SK-N-SH (cell line): ENCODE measurements at regions of chr6 and their contacts with region 1.

Region 1: DNA sequence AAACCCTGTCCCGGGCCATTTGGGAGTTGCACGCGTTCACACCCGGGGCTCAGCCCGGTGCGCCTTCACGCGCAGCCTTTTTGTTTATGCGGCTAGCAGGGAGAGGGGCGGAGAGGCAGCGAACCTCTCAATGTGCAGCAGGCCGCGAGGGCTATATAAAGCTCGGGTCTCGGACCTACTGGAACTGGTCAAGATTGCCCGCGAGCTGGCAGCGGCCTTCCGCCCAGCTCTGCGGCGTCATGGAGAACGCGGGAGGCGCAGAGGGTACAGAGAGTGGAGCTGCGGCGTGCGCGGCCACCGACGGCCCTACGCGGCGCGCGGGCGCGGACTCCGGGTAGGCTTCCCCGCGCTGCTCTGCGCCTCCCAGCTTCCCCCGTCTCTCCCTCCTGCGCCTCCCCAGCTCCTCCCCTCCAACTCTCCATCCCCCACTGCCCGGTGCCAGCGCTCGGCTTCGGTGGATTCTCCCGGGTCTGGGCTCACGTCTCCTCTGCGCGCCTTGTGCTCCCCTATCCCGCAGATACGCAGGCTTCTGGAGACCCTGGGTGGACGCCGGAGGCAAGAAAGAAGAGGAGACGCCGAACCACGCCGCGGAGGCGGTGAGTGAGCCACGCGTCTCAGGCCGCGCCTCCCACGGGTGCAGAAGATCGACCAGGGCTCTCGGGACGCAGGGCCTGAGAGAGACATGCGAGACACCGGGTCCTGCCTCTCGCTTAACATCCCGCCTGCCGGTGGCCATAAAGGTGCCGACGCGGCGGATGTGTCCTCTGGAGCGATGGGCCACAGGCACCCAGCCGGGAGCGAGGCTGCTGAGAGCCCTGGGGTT is at the start of gene RIPPLY2:
- DNase-seq: peak; percentile 89
- H3K4me3 ChIP-seq: peak within 1 kb of the TSS; percentile 57 to 59
- H3K27ac ChIP-seq: peak within 1 kb of the TSS in 1 of 2 experiments; percentile 87; a peak in 2 of 4 replicates
- H3K4me1 ChIP-seq: peaks cover 0 to 8% of the 10 kb centered on the region in 2 experiments; a peak in 2 of 4 replicates
- H3K27me3 ChIP-seq: peaks cover 33% of the 10 kb centered on the region
- CTCF ChIP-seq: no peak
- EP300 ChIP-seq: no peak
- RAD21 ChIP-seq: no peak
- polyA plus RNA-seq, gene RIPPLY2: 0.33 and 1.3 TPM in 2 replicates

Region 2: GRCh38 chr6:83615025-83615999 is 238.1 kb before region 1 on chr6:
- CTCF ChIA-PET with region 1: interaction called, 4 read pairs
- POLR2A ChIA-PET with region 1: interaction called, 27 read pairs
- DNase-seq: peak; percentile 71
- H3K4me3 ChIP-seq: peak overlapping the region in 1 of 2 experiments; percentile 29; a peak in 3 of 4 replicates
- H3K27ac ChIP-seq: peak overlapping the region; percentile 29 to 100; a peak in 3 of 4 replicates
- H3K4me1 ChIP-seq: peaks cover 0 to 34% of the 10 kb centered on the region in 2 experiments; a peak in 2 of 4 replicates
- H3K27me3 ChIP-seq: no peaks in the 10 kb centered on the region
- CTCF ChIP-seq: peak; percentile 79
- EP300 ChIP-seq: peak in 1 of 2 experiments; percentile 91; a peak in 2 of 4 replicates
- RAD21 ChIP-seq: peak; percentile 67

Region 3: DNA sequence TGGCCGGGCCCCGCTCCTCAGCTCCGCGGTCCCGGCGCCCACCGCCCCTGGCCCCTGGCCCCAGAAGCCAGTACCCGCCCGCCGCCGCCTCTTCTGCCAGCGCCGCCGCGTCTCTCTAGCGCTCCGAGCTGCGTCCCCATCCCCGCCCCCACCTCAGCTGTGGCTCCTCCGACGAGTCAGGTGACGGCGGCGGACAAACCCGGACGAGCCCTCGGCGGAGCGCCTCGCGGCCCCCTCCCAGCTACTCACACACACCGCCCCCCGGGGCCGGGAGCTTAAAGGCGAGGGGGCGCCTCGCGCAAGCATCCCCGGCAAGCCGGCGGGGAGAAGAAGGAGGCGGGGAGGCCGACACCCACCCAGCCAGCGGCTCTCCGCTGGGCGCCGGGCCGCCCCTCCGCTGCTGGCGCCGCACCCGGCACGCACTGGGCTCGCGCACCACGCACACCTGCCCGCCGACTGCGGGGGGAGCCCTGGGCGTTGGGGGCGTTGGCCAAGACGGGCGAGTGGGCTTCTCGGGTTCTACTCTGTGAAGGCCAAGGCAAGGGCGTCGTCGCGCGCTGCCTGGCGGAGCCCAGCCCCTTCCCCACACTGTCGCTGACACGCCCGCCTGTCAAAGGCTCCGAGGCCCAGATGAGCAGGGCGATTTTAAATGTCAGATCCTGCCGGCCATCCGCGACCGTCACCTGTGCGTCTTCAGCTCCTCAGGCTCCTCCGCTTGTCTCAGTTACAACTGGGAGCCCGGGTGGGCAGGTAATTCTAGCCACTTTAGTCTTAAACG is 144.2 kb before region 1 on chr6 and contains the start of gene SNAP91:
- CTCF ChIA-PET with region 1: no interaction called
- POLR2A ChIA-PET with region 1: interaction called, 14 read pairs
- DNase-seq: peak; percentile 95
- H3K4me3 ChIP-seq: peak within 1 kb of the TSS; percentile 60 to 61
- H3K27ac ChIP-seq: peak within 1 kb of the TSS in 1 of 2 experiments; percentile 87; a peak in 2 of 4 replicates
- H3K4me1 ChIP-seq: peaks cover 0 to 5% of the 10 kb centered on the region in 2 experiments; a peak in 2 of 4 replicates
- H3K27me3 ChIP-seq: peaks cover 30% of the 10 kb centered on the region; the same call in 1 of the 2 replicates
- CTCF ChIP-seq: no peak
- EP300 ChIP-seq: no peak
- RAD21 ChIP-seq: no peak
- polyA plus RNA-seq, gene SNAP91: 0.64 and 2.0 TPM in 2 replicates